ENCODE measurements at regions of chr4 and their contacts with region 1.

Region 1: DNA sequence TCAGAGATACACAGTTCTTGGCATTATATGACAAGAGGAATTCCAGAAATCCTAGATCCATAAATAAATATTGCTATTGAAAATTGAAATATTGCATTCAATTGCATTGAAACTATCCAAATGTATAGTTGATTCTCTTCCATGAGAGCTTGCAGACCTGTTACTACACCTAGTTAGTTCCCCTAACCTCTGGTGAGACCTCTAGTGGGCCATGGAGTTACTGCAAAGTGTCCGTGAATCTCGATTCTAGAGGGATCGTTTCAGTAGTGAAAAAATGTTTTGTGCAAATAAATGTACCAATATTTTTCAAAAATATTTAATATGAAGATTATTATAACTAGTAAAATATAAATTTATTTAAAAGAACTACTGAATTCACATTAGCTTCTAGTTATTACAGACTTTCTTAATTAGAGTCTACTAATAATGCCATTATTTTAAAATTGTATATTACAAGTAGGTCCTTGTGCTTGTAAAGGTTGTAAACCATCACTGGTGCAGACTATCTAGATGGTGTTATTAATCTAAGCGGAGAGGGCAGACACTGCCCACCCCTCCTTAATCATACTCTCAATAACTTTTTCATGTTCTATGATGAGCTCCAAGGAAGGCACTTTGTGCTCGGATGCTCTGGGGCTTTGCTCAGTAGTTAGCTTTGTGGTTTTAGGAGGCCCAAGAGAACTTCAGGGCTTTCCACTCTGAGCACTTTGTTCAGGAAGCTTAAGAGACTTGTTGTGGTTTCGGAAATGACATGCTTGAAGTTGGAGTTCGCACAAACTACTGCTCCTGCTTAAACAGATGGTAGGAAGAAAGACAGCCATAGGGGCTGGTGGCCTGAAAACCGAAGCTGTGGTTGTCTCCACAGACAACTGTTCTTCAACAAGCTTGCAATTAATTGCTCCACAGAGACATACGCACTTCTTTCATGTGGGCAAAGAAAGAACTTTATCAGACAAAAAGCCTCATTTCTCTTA is 42.8 kb downstream of the IL21 start:
- DNase-seq: peak; percentile 41
- ATAC-seq: peak; percentile 88
- H3K4me3 ChIP-seq: no peak overlapping the region
- H3K27ac ChIP-seq: no peak overlapping the region
- H3K4me1 ChIP-seq: no peaks in the 10 kb centered on the region
- H3K27me3 ChIP-seq: no peaks in the 10 kb centered on the region
- CTCF ChIP-seq: peak; percentile 63
- EP300 ChIP-seq: no peak
- POLR2A ChIP-seq: no peak
- RAD21 ChIP-seq: no peak

Region 2: GRCh38 chr4:121823505-121824170 is 754.5 kb before region 1 on chr4 and contains the start of gene CCNA2:
- CTCF ChIA-PET with region 1: no interaction called
- POLR2A ChIA-PET with region 1: no interaction called
- in situ Hi-C with region 1: no loop called
- intact Hi-C with region 1: loop called (anchors 5 kb)
- DNase-seq: peak; percentile 95
- ATAC-seq: peak; percentile 92
- H3K4me3 ChIP-seq: peak within 1 kb of the TSS; percentile 79 to 99 (median 90)
- H3K27ac ChIP-seq: peak within 1 kb of the TSS; percentile 87
- H3K4me1 ChIP-seq: peaks cover 27% of the 10 kb centered on the region
- H3K27me3 ChIP-seq: no peaks in the 10 kb centered on the region; a peak in 1 of 5 replicates
- CTCF ChIP-seq: no peak
- EP300 ChIP-seq: 0 out of 4 replicates have a peak, but pooled peaks of 1 of the 2 experiments have one; percentile 41
- POLR2A ChIP-seq: peak; percentile 81 to 87
- RAD21 ChIP-seq: no peak; the same call in 1 of the 2 replicates
- total RNA-seq, gene CCNA2: 105 and 160 TPM in 2 replicates

Region 3: GRCh38 chr4:121900132-121900983 is 677.7 kb before region 1 on chr4:
- CTCF ChIA-PET with region 1: interaction called, 13 read pairs
- POLR2A ChIA-PET with region 1: no interaction called
- in situ Hi-C with region 1: loop called (anchors 10 kb)
- intact Hi-C with region 1: loop called (anchors 1 kb)
- DNase-seq: peak; percentile 45
- ATAC-seq: peak; percentile 87
- H3K4me3 ChIP-seq: no peak overlapping the region
- H3K27ac ChIP-seq: no peak overlapping the region
- H3K4me1 ChIP-seq: no peaks in the 10 kb centered on the region
- H3K27me3 ChIP-seq: no peaks in the 10 kb centered on the region
- CTCF ChIP-seq: peak; percentile 81
- EP300 ChIP-seq: no peak
- POLR2A ChIP-seq: no peak
- RAD21 ChIP-seq: peak; percentile 63

Region 4: DNA sequence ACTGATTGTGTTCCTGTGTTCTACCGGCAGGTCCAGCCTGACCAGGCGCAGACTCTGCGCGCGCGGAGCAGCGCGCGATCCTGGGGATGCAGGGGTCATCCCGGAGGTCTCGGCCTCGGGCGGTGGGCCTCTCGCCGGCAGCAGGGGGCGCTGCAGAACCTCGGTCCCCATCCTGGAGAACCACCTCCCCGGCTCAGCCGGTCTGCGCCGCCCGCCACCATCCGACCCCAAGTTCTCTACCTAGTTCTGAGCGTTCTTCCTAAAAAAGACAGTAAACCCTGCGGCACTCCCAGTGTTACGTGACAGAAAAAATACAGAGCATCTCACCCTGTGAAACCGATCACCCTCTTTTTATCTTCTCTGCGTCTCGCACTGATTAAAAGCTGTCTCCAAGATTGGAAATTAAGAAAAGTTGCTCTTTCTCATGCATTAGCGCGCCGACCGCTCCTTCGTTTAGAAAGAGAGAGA is 627.8 kb before region 1 on chr4:
- CTCF ChIA-PET with region 1: no interaction called
- POLR2A ChIA-PET with region 1: no interaction called
- in situ Hi-C with region 1: no loop called
- intact Hi-C with region 1: loop called (anchors 2 kb)
- DNase-seq: peak; percentile 20
- ATAC-seq: peak; percentile 96
- H3K4me3 ChIP-seq: peak overlapping the region in 2 of 3 experiments; percentile 40 to 60; a peak in 4 of 6 replicates
- H3K27ac ChIP-seq: no peak overlapping the region
- H3K4me1 ChIP-seq: peaks cover 14% of the 10 kb centered on the region
- H3K27me3 ChIP-seq: peaks cover 7 to 51% of the 10 kb centered on the region in 2 experiments
- CTCF ChIP-seq: peak; percentile 81
- EP300 ChIP-seq: no peak
- POLR2A ChIP-seq: no peak
- RAD21 ChIP-seq: peak; percentile 80

Region 5: GRCh38 chr4:122003335-122003734 is 574.8 kb before region 1 on chr4:
- CTCF ChIA-PET with region 1: no interaction called
- POLR2A ChIA-PET with region 1: no interaction called
- in situ Hi-C with region 1: no loop called
- intact Hi-C with region 1: loop called (anchors 1 kb)
- DNase-seq: peak; percentile 64
- ATAC-seq: peak; percentile 99
- H3K4me3 ChIP-seq: no peak overlapping the region
- H3K27ac ChIP-seq: no peak overlapping the region
- H3K4me1 ChIP-seq: 0 out of 2 replicates have a peak, but pooled peaks cover 6% of the 10 kb centered on the region
- H3K27me3 ChIP-seq: no peaks in the 10 kb centered on the region; a peak in 1 of 5 replicates
- CTCF ChIP-seq: peak; percentile 72
- EP300 ChIP-seq: no peak
- POLR2A ChIP-seq: no peak
- RAD21 ChIP-seq: peak; percentile 68

Region 6: GRCh38 chr4:122205690-122206089 is 372.4 kb before region 1 on chr4:
- CTCF ChIA-PET with region 1: no interaction called
- POLR2A ChIA-PET with region 1: no interaction called
- in situ Hi-C with region 1: no loop called
- intact Hi-C with region 1: loop called (anchors 10 kb)
- DNase-seq: no peak
- ATAC-seq: peak; percentile 71
- H3K4me3 ChIP-seq: no peak overlapping the region
- H3K27ac ChIP-seq: no peak overlapping the region
- H3K4me1 ChIP-seq: no peaks in the 10 kb centered on the region
- H3K27me3 ChIP-seq: no peaks in the 10 kb centered on the region
- CTCF ChIP-seq: peak; percentile 37
- EP300 ChIP-seq: no peak
- POLR2A ChIP-seq: no peak
- RAD21 ChIP-seq: no peak

Region 7: GRCh38 chr4:122309988-122310626 is 268.0 kb before region 1 on chr4:
- CTCF ChIA-PET with region 1: interaction called, 15 read pairs
- POLR2A ChIA-PET with region 1: no interaction called
- in situ Hi-C with region 1: loop called (anchors 25 kb)
- intact Hi-C with region 1: loop called (anchors 1 kb)
- DNase-seq: peak; percentile 11
- ATAC-seq: no peak
- H3K4me3 ChIP-seq: no peak overlapping the region
- H3K27ac ChIP-seq: no peak overlapping the region
- H3K4me1 ChIP-seq: no peaks in the 10 kb centered on the region
- H3K27me3 ChIP-seq: no peaks in the 10 kb centered on the region
- CTCF ChIP-seq: no peak
- EP300 ChIP-seq: no peak
- POLR2A ChIP-seq: no peak
- RAD21 ChIP-seq: no peak

Measured in HepG2 (cell line).